ENCODE measurements at regions of chr1 and their contacts with region 1.

Region 1: GRCh38 chr1:201955009-201955728 is at the start of gene TIMM17A:
- DNase-seq: peak; percentile 95 to 97
- ATAC-seq: peak; percentile 100
- total RNA-seq, gene TIMM17A: 53.1 to 60.1 TPM

Region 2: GRCh38 chr1:201888282-201889089 is 66.7 kb before region 1 on chr1 and contains the start of gene SHISA4:
- intact Hi-C with region 1: loop called in 1 of 2 experiments (anchors 5 kb)
- DNase-seq: peak; percentile 57 to 63
- ATAC-seq: peak; percentile 91
- total RNA-seq, gene SHISA4: 1.7 to 2.6 TPM